SK-N-SH (cell line): ENCODE measurements at regions of chr7 and their contacts with region 1.

Region 1: DNA sequence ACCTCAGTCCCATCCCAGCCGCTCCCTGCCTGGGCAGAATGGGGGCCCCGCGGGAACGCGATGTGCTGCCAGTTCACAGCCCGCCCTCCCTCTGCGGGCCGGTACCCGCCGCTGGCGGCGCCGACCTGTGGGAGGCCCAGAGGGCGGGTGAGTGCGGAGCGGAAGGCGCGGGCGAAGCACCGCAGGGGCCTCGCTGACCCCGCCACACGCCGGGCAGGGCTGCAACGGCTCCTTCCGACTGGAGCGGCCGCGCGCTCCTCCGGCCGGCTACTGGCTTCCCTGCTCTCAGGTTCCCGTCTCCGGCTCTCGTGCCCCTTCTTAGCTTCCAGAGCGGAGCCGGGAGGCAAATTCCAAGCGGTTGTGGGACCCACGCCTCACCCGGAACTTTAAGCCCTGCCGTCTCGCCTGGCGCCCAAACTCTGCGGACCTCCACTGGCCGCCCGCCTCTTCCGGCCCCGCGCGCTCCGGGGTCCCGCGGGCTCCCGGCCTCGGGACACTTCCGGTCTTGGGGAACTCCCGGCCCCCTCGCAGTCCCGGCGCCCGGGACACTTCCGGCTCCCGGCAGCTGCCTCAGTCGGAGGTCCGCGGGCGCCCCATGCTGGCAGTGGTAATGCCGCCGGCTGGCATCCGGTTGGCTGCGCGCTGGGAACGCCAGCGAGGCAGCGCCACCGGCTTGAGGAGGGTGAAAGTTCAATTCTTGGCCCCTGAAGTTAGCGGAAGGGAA is at the start of gene CYREN:
- DNase-seq: peak; percentile 100
- H3K4me3 ChIP-seq: peak within 1 kb of the TSS; percentile 89 to 97
- H3K27ac ChIP-seq: peak within 1 kb of the TSS; percentile 90 to 97
- H3K4me1 ChIP-seq: peaks cover 3 to 24% of the 10 kb centered on the region in 2 experiments; a peak in 3 of 4 replicates
- H3K27me3 ChIP-seq: no peaks in the 10 kb centered on the region
- CTCF ChIP-seq: peak; percentile 78
- EP300 ChIP-seq: peak in 1 of 2 experiments; percentile 23; a peak in 3 of 4 replicates
- RAD21 ChIP-seq: peak; percentile 77
- polyA plus RNA-seq, gene CYREN: 53.4 and 60.6 TPM in 2 replicates

Region 2: GRCh38 chr7:134986363-134987251 is 183.8 kb before region 1 on chr7 and contains the start of gene AGBL3:
- CTCF ChIA-PET with region 1: interaction called, 12 read pairs
- POLR2A ChIA-PET with region 1: interaction called, 6 read pairs
- DNase-seq: peak; percentile 94
- H3K4me3 ChIP-seq: peak within 1 kb of the TSS; percentile 98
- H3K27ac ChIP-seq: peak within 1 kb of the TSS; percentile 71 to 96
- H3K4me1 ChIP-seq: peaks cover 0 to 14% of the 10 kb centered on the region in 2 experiments; a peak in 1 of 4 replicates
- H3K27me3 ChIP-seq: no peaks in the 10 kb centered on the region
- CTCF ChIP-seq: peak; percentile 79
- EP300 ChIP-seq: no peak; a peak in 1 of 4 replicates
- RAD21 ChIP-seq: peak; percentile 36
- polyA plus RNA-seq, gene AGBL3: 0.35 and 0.91 TPM in 2 replicates

Region 3: GRCh38 chr7:135206941-135207391 is 36.5 kb after region 1 on chr7:
- CTCF ChIA-PET with region 1: interaction called, 15 read pairs
- POLR2A ChIA-PET with region 1: interaction called, 6 read pairs
- DNase-seq: no peak
- H3K4me3 ChIP-seq: no peak overlapping the region
- H3K27ac ChIP-seq: no peak overlapping the region
- H3K4me1 ChIP-seq: peaks cover 0 to 6% of the 10 kb centered on the region in 2 experiments; a peak in 2 of 4 replicates
- H3K27me3 ChIP-seq: no peaks in the 10 kb centered on the region
- CTCF ChIP-seq: no peak
- EP300 ChIP-seq: no peak
- RAD21 ChIP-seq: no peak